HepG2 (cell line): ENCODE measurements at regions of chr1 and their contacts with region 1.

Region 1: DNA sequence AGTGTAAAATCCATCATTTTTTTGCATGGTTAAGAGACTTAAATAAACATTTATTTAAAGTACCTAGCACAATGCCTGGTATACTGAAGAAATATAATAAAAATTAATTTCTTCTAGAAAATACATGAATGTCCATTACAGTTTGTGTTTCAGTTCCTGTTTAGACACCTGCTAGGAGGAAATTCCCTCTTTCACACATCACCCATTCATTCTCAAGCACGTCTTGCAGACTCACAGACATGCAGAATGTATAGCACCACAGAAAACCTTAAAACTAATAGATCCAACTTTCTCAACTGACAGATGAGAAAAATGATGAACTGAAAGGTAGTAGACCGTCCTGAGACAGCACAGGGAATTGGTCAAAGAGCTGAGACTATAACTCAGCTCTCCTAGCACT is 172.2 kb upstream of the C8B start:
- DNase-seq: no peak
- ATAC-seq: no peak
- H3K4me3 ChIP-seq: no peak overlapping the region
- H3K27ac ChIP-seq: no peak overlapping the region
- H3K4me1 ChIP-seq: no peaks in the 10 kb centered on the region
- H3K27me3 ChIP-seq: no peaks in the 10 kb centered on the region
- CTCF ChIP-seq: no peak
- EP300 ChIP-seq: no peak
- POLR2A ChIP-seq: no peak
- RAD21 ChIP-seq: no peak

Region 2: DNA sequence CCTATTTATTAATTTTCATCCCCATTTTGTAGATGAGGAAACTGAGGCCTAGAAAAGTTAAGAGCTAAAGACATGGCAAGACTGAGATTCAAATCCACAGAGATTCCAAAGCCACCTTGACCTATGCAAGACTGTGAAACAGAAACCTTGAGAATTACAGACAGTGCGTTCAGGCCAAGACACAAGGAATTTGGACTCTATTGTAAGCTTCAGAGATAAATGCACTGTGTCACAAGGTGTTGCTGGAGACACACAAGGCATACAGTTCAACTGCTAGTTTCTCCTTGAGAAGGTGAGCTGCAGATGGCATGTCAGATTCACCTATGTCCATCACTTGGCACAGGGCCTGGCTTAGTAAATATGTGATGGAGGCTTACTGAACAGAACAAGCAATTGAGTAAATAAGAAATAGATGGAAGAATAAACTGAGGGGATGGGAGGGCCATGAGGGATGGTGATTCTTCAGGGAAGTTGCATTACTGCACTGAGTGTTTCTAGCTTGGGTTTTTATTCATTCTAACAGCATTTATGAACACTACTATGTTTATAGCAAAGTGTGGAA is 70.8 kb after region 1 on chr1:
- CTCF ChIA-PET with region 1: no interaction called
- POLR2A ChIA-PET with region 1: no interaction called
- in situ Hi-C with region 1: no loop called
- intact Hi-C with region 1: loop called (anchors 2 kb)
- DNase-seq: no peak
- ATAC-seq: no peak
- H3K4me3 ChIP-seq: no peak overlapping the region
- H3K27ac ChIP-seq: no peak overlapping the region
- H3K4me1 ChIP-seq: no peaks in the 10 kb centered on the region
- H3K27me3 ChIP-seq: no peaks in the 10 kb centered on the region
- CTCF ChIP-seq: no peak
- EP300 ChIP-seq: no peak
- POLR2A ChIP-seq: no peak
- RAD21 ChIP-seq: no peak